B cell (primary cell): ENCODE measurements at regions of chr14 and their contacts with region 1.

Region 1: DNA sequence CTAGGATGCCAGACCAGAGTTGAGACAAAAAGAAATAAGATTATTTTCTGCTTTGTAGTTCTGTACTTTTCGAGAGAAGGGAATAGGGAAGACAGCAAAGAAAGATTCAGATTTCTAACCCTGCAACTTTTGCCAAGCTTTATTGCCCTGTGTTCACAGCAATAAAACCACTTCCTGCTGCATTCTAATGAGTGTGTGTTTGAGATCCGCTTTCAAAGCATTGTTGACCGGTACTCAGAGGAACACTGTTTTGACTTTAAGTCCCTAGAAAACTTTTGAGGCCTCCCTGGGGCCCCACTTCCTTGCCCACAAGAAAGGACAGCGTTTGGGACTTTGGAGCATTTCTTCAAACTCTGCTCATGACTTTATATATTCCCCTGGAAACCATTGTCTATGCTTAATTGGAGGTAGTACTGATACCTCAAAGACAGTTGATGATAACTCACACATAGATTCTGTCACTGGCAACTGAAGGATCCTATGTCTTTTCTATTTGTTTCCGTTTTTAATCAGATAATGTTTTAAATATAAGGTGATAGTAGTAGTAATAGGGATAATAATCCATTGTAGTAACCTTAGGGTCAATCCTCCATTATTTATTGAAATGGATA is 1.3 kb downstream of the RNASE6 start:
- DNase-seq: peak; percentile 59
- ATAC-seq: peak; percentile 46
- H3K4me3 ChIP-seq: peak overlapping the region; percentile 65 to 90 (median 80)
- H3K4me3 Mint-ChIP-seq: peak overlapping the region; percentile 97
- H3K27ac ChIP-seq: peak overlapping the region; percentile 76 to 84
- H3K27ac Mint-ChIP-seq: peak overlapping the region; percentile 92
- H3K4me1 ChIP-seq: peaks cover 39 to 43% of the 10 kb centered on the region in 2 donors
- H3K4me1 Mint-ChIP-seq: peaks cover 53% of the 10 kb centered on the region
- H3K27me3 ChIP-seq: no peaks in the 10 kb centered on the region
- H3K27me3 Mint-ChIP-seq: no peaks in the 10 kb centered on the region
- CTCF ChIP-seq: no peak

Region 2: GRCh38 chr14:20714593-20715250 is 67.7 kb before region 1 on chr14:
- CTCF ChIA-PET with region 1: interaction called, 7 read pairs
- POLR2A ChIA-PET with region 1: interaction called, 9 read pairs
- intact Hi-C with region 1: loop called (anchors 2 kb)
- DNase-seq: no peak
- ATAC-seq: no peak
- H3K4me3 ChIP-seq: peak overlapping the region in 1 of 5 experiments; percentile 27
- H3K4me3 Mint-ChIP-seq: peak overlapping the region; percentile 59
- H3K27ac ChIP-seq: peak overlapping the region; percentile 86 to 87
- H3K27ac Mint-ChIP-seq: peak overlapping the region; percentile 97
- H3K4me1 ChIP-seq: peaks cover 23 to 66% of the 10 kb centered on the region in 2 donors
- H3K4me1 Mint-ChIP-seq: peaks cover 60% of the 10 kb centered on the region
- H3K27me3 ChIP-seq: no peaks in the 10 kb centered on the region
- H3K27me3 Mint-ChIP-seq: no peaks in the 10 kb centered on the region
- CTCF ChIP-seq: no peak

Region 3: GRCh38 chr14:20818861-20819260 is 36.5 kb after region 1 on chr14:
- CTCF ChIA-PET with region 1: interaction called, 3 read pairs
- POLR2A ChIA-PET with region 1: no interaction called
- intact Hi-C with region 1: loop called (anchors 1 kb)
- DNase-seq: no peak
- ATAC-seq: no peak
- H3K4me3 ChIP-seq: no peak overlapping the region
- H3K4me3 Mint-ChIP-seq: no peak overlapping the region
- H3K27ac ChIP-seq: no peak overlapping the region
- H3K27ac Mint-ChIP-seq: no peak overlapping the region
- H3K4me1 ChIP-seq: peaks cover 24 to 26% of the 10 kb centered on the region in 2 donors
- H3K4me1 Mint-ChIP-seq: peaks cover 34% of the 10 kb centered on the region
- H3K27me3 ChIP-seq: no peaks in the 10 kb centered on the region
- H3K27me3 Mint-ChIP-seq: peaks cover 18% of the 10 kb centered on the region
- CTCF ChIP-seq: no peak

Region 4: GRCh38 chr14:20873370-20874177 is 91.2 kb after region 1 on chr14:
- CTCF ChIA-PET with region 1: no interaction called
- POLR2A ChIA-PET with region 1: no interaction called
- intact Hi-C with region 1: no loop called
- DNase-seq: peak; percentile 77
- ATAC-seq: peak; percentile 56
- H3K4me3 ChIP-seq: peak overlapping the region in 1 of 5 experiments; percentile 26
- H3K4me3 Mint-ChIP-seq: peak overlapping the region; percentile 54
- H3K27ac ChIP-seq: no peak overlapping the region
- H3K27ac Mint-ChIP-seq: no peak overlapping the region
- H3K4me1 ChIP-seq: peaks cover 6 to 9% of the 10 kb centered on the region in 2 donors
- H3K4me1 Mint-ChIP-seq: peaks cover 13% of the 10 kb centered on the region
- H3K27me3 ChIP-seq: peaks cover 0 to 17% (median 2%) of the 10 kb centered on the region in 4 experiments
- H3K27me3 Mint-ChIP-seq: peaks cover 37% of the 10 kb centered on the region
- CTCF ChIP-seq: peak; percentile 82